OCI-LY7 (cell line): ENCODE measurements at regions of chr2 and their contacts with region 1.

Region 1: GRCh38 chr2:65031341-65032018 is 24.7 kb upstream of the CEP68 start:
- DNase-seq: peak; percentile 96
- H3K4me3 ChIP-seq: peak overlapping the region; percentile 64
- H3K27ac ChIP-seq: peak overlapping the region; percentile 98
- H3K4me1 ChIP-seq: peaks cover 75% of the 10 kb centered on the region
- CTCF ChIP-seq: no peak

Region 2: GRCh38 chr2:64523666-64524603 is 507.5 kb before region 1 on chr2 and contains the start of gene AFTPH:
- CTCF ChIA-PET with region 1: no interaction called
- POLR2A ChIA-PET with region 1: interaction called, 3 read pairs
- intact Hi-C with region 1: loop called (anchors 5 kb)
- DNase-seq: peak; percentile 99
- H3K4me3 ChIP-seq: peak within 1 kb of the TSS; percentile 84
- H3K27ac ChIP-seq: peak within 1 kb of the TSS; percentile 82
- H3K4me1 ChIP-seq: peaks cover 29% of the 10 kb centered on the region
- CTCF ChIP-seq: no peak
- total RNA-seq, gene AFTPH: 39.0 and 40.6 TPM in 2 replicates

Region 3: GRCh38 chr2:64644177-64645004 is 387.1 kb before region 1 on chr2:
- CTCF ChIA-PET with region 1: no interaction called
- POLR2A ChIA-PET with region 1: interaction called, 3 read pairs
- intact Hi-C with region 1: loop called (anchors 5 kb)
- DNase-seq: peak; percentile 79
- H3K4me3 ChIP-seq: peak overlapping the region; percentile 67
- H3K27ac ChIP-seq: peak overlapping the region; percentile 88
- H3K4me1 ChIP-seq: peaks cover 100% of the 10 kb centered on the region
- CTCF ChIP-seq: no peak

Region 4: GRCh38 chr2:64873472-64873924 is 158.0 kb before region 1 on chr2:
- CTCF ChIA-PET with region 1: no interaction called
- POLR2A ChIA-PET with region 1: no interaction called
- intact Hi-C with region 1: loop called (anchors 1 kb)
- DNase-seq: peak; percentile 75
- H3K4me3 ChIP-seq: peak overlapping the region; percentile 28
- H3K27ac ChIP-seq: no peak overlapping the region
- H3K4me1 ChIP-seq: peaks cover 9% of the 10 kb centered on the region
- CTCF ChIP-seq: peak; percentile 98

Region 5: DNA sequence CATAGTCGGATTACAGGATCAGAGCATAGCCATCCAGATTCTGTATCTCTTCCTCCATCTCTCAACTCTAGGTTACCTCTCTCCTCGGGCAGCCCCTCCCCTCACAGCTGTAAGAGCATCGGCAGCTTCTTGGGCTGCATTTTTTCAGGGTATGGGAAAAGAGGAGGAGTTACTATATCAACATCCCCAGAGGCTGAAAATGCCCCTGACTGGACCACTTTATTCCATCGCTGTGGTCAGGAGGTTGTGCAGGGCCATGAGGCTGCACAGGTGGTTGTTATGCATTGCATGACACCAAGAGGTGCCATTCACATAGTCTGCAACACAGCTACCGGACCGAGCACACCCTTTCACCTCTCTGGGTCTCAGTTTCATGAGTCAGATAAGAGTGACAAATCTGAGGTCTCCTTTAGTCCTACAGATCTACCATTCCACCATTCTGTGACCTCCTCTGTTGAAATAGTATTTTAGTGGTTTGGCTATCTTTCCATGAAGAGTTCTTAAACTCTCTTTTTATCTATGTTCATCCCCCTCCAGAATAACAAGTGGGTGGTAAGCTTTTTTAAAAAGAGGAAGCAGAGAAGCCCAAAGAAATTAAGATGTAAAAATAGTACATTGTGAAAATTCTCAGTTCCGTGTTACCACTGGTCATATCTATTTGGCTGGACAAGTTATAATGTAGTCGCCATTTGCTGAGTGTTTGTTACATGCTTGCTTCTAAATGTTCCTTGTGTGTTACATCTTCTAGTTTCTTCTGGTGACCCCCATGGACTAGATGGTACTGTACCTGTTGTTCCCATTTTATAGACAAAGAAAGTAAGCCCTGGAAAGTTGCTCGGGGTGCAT is 98.9 kb before region 1 on chr2:
- CTCF ChIA-PET with region 1: no interaction called
- POLR2A ChIA-PET with region 1: interaction called, 8 read pairs
- intact Hi-C with region 1: loop called (anchors 1 kb)
- DNase-seq: peak; percentile 81
- H3K4me3 ChIP-seq: peak overlapping the region; percentile 77
- H3K27ac ChIP-seq: peak overlapping the region; percentile 88
- H3K4me1 ChIP-seq: peaks cover 71% of the 10 kb centered on the region
- CTCF ChIP-seq: no peak; the same call in 1 of the 2 replicates

Region 6: DNA sequence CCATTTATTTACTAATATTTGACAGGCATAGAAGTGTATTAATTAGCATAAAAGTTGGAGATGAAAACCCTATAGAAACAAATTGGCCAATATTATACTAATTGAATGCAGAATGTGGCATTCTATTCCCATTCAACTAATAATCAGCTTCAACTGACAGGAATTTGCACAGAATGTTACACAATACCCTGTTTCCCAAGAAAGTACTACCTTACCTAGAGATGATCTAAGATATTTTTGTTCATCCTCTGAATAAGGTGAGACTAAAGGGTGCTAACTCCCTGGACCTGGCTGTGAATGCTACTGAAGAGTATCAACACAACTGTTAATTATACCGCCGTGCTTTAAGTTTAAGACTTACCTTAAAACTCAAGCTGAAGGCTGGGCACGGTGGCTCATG is 53.7 kb after region 1 on chr2:
- CTCF ChIA-PET with region 1: no interaction called
- POLR2A ChIA-PET with region 1: no interaction called
- intact Hi-C with region 1: no loop called
- DNase-seq: no peak
- H3K4me3 ChIP-seq: no peak overlapping the region
- H3K27ac ChIP-seq: no peak overlapping the region
- H3K4me1 ChIP-seq: peaks cover 22% of the 10 kb centered on the region
- CTCF ChIP-seq: no peak

Region 7: GRCh38 chr2:65566620-65567019 is 535.1 kb after region 1 on chr2:
- CTCF ChIA-PET with region 1: no interaction called
- POLR2A ChIA-PET with region 1: no interaction called
- intact Hi-C with region 1: no loop called
- DNase-seq: no peak
- H3K4me3 ChIP-seq: no peak overlapping the region
- H3K27ac ChIP-seq: no peak overlapping the region
- H3K4me1 ChIP-seq: no peaks in the 10 kb centered on the region
- CTCF ChIP-seq: no peak